ENCODE measurements at regions of chr1 and their contacts with region 1.

Region 1: DNA sequence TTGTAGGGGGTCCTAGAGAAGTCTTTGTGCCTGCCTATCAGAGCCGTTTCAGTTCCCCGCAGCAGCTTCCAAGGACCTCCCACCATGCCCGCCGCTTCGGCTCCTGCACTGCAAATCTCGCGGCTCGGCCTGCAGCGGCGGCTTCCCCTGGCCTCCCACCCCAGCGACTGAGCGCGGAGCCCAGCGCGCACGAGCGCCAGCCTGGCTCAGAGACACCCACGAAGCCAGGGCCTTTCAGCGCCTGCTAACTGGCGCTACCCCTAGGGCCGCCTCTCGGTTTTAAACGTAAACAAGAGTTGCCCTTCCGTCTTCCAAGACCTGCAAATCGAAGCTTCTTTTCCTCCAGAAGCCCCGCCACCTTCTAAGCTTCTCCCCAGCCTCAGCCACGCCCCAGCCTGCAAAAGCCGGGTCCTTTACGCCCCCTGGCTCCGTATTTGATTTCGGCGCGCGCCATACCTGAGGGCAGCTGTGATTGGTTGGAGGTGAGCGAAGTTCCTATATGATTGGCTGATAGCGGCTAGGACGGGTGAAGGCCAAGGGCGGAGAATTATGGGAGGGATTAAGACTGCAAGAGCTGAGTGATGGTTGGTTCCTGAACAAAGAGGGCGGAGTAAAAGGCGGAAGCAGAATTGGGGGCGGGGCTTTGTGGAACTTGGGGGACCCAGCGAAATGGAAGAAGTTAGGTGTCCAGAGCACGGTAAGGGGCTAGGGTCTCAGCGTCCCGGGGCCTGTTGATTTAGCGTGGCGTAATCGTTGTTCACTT is at the start of gene TTF2:
- DNase-seq: peak; percentile 87
- ATAC-seq: peak; percentile 99
- total RNA-seq, gene TTF2: 6.7 TPM

Region 2: DNA sequence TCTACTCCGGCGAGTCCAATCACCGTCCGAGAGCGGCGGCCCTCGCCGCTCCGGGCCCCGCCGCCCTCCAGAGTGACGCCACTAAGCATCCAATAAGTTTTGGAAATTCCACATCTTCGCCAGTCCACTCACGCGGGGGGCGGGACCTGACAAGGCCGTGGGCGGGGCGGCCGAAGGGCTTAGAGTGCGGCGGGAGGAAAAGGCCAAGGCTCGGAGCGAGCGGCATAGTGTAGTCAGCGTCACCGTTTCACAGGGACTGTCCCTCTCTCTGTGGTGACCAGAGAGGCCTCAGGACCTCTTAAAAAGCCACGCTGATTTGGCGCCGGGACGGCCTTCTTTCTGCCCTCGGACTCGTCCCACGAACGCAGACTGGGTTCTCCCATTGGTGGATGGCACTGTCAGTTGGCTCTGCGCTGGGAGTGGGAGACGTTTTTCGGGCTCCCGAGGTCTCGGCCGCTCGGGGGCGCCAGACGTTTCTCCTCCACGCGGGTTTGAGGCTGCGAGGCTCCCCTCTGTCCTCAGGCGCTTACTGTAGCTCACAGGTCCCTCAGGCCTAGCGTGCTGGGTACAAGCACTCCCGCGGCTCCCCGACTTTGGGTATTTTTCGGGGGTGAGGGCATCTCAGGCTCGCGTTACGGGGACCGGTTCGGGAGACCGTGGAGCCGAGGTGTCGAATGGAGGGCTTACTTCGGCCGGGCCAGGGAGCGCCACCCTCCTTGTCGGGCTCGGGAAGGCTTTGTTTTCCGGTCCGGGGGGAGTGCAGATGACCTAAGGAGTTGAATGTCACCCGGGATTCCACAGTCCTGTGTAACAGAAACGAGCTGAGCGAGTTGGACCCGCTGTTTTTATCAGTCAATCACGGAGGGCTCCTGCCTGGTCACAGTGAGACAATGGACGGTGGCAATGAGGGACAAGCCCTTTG is 62.2 kb after region 1 on chr1:
- intact Hi-C with region 1: loop called (anchors 10 kb)
- DNase-seq: peak; percentile 98
- ATAC-seq: peak; percentile 97

Region 3: DNA sequence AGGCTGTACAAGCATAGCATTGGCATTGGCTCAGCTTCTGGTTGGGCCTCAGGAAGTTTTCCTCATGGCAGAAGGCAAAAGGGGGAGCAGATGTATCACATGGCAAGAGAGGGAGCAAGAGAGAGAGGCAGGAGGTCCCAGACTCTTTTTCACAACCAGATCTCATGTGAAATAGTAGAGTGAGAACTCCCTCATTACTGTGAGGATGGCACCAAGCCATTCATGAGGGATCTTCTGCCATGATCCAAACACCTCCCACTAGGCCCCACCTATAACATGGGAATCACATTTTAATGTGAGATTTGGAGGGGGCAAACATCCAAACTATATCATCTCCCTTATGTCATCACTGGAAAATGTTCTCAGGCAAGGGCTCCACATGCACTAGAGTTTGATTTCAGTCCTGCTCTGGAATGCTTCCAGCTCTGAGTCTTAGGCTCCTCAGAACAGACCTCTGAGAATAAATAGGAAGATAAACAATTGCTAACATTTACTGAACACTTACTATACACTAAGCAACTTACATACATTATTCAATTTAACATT is 190.3 kb after region 1 on chr1:
- intact Hi-C with region 1: no loop called
- DNase-seq: no peak
- ATAC-seq: peak; percentile 33

Region 4: DNA sequence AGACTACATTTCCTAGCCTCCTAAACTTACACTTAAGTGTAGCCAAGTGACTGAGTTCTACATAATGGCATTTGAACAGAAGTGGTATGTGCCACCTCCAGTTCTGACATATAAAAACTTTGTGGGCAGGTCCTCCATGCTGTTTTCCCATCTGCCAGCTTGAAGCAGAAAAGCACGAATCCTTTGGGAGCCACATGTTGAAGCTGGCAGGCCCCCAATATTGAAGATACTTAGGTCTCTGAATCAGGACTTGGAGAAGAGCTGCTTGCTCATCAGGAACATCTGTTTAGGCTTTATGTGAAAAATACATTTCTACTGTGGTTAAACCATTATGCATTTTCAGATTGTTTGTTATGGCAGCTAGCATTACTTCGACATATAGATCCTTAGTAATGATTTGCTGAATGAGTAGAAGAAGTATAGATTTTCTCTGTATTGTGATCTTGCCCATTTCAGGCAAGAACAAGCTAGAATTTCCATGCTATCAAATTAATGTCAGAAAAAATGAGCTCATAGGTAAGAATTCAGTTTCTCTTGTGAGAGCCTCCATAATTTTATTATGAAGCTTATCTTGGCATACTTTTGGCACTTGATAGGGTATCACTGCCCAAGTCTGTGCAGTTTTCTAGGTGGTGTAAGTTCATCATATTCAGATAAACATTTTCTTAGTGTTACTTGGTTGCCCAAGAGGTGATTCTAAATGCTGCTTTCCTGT is 801.2 kb after region 1 on chr1:
- intact Hi-C with region 1: no loop called
- DNase-seq: no peak
- ATAC-seq: no peak

Measured in left ventricle myocardium superior (tissue), 1 donor.